Naive thymus-derived CD4-positive, alpha-beta T cell (primary cell): ENCODE measurements at regions of chr12 and their contacts with region 1.

Region 1: DNA sequence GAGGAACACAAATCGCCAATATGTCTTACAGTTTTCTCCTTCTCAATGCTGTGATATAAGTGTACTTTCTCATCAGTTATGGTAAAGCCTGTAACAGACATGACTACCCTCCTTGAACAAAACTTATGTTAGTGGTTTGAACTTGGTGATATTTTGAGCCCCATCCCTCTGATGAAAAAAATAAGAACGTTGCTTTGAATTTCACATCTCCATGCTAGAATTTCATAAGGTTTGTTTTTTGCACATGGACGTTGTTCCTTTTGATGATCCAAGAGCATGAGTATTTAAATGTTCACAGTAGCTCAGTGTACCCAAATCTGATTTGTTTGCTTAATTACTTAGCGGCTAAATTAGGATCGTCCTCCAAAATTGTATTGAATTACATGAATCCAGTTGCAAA is at the start of gene SLC15A5:
- DNase-seq: no peak
- ATAC-seq: no peak
- H3K4me3 ChIP-seq: no peak within 1 kb of the TSS
- H3K4me3 Mint-ChIP-seq: no peak within 1 kb of the TSS
- H3K27ac ChIP-seq: no peak within 1 kb of the TSS
- H3K27ac Mint-ChIP-seq: no peak within 1 kb of the TSS
- H3K4me1 ChIP-seq: no peaks in the 10 kb centered on the region
- H3K4me1 Mint-ChIP-seq: no peaks in the 10 kb centered on the region
- H3K27me3 ChIP-seq: no peaks in the 10 kb centered on the region
- H3K27me3 Mint-ChIP-seq: no peaks in the 10 kb centered on the region
- total RNA-seq, gene SLC15A5: not detected

Region 2: GRCh38 chr12:17680220-17680619 is 1402.6 kb after region 1 on chr12:
- CTCF ChIA-PET with region 1: no interaction called
- POLR2A ChIA-PET with region 1: no interaction called
- intact Hi-C with region 1: loop called in 1 of 2 experiments (anchors 5 kb)
- DNase-seq: no peak
- ATAC-seq: no peak
- H3K4me3 ChIP-seq: no peak overlapping the region
- H3K4me3 Mint-ChIP-seq: no peak overlapping the region
- H3K27ac ChIP-seq: no peak overlapping the region
- H3K27ac Mint-ChIP-seq: no peak overlapping the region
- H3K4me1 ChIP-seq: no peaks in the 10 kb centered on the region
- H3K4me1 Mint-ChIP-seq: no peaks in the 10 kb centered on the region
- H3K27me3 ChIP-seq: no peaks in the 10 kb centered on the region
- H3K27me3 Mint-ChIP-seq: no peaks in the 10 kb centered on the region